Body of pancreas (tissue), 4 donors: ENCODE measurements at regions of chr5 and their contacts with region 1.

Region 1: DNA sequence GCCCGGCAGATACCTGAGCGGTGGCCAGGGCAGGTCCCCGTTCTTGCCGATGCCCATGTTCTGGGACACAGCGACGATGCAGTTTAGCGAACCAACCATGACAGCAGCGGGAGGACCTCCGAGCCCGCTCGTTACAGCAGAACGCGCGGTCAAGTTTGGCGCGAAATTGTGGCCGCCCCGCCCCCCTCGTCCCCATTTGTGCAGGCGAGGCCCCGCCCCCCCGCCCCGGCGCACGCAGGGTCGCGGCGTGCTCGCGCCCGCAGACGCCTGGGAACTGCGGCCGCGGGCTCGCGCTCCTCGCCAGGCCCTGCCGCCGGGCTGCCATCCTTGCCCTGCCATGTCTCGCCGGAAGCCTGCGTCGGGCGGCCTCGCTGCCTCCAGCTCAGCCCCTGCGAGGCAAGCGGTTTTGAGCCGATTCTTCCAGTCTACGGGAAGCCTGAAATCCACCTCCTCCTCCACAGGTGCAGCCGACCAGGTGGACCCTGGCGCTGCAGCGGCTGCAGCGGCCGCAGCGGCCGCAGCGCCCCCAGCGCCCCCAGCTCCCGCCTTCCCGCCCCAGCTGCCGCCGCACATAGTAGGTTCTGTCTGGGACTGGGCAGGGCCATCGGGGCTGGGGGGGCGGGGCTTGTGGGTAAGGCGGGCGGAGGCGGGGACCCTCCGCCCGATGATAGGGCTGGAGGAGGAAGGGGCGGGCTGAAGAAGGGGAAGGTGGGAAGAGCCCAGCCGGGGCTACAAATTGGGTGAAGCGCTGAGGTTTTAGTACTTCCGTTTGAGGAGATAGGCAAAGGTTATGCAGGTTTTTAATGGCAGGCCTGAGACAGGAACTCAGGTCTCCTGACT is at the starts of genes DHFR and MSH3:
- DNase-seq: peak; percentile 82 to 91 (median 88)
- ATAC-seq: peak; percentile 63
- H3K4me3 ChIP-seq: peak within 1 kb of the TSS; percentile 83 to 85
- H3K27ac ChIP-seq: peak within 1 kb of the TSS; percentile 79 to 98 (median 94)
- H3K4me1 ChIP-seq: peaks cover 25% of the 10 kb centered on the region
- H3K27me3 ChIP-seq: no peaks in the 10 kb centered on the region
- CTCF ChIP-seq: peak in 2 of 7 experiments; percentile 21 to 39
- POLR2A ChIP-seq: peak; percentile 36 to 68 (median 65)
- total RNA-seq, gene DHFR: 1.8 to 2.0 TPM
- total RNA-seq, gene MSH3: 9.2 to 10.9 TPM

Region 2: DNA sequence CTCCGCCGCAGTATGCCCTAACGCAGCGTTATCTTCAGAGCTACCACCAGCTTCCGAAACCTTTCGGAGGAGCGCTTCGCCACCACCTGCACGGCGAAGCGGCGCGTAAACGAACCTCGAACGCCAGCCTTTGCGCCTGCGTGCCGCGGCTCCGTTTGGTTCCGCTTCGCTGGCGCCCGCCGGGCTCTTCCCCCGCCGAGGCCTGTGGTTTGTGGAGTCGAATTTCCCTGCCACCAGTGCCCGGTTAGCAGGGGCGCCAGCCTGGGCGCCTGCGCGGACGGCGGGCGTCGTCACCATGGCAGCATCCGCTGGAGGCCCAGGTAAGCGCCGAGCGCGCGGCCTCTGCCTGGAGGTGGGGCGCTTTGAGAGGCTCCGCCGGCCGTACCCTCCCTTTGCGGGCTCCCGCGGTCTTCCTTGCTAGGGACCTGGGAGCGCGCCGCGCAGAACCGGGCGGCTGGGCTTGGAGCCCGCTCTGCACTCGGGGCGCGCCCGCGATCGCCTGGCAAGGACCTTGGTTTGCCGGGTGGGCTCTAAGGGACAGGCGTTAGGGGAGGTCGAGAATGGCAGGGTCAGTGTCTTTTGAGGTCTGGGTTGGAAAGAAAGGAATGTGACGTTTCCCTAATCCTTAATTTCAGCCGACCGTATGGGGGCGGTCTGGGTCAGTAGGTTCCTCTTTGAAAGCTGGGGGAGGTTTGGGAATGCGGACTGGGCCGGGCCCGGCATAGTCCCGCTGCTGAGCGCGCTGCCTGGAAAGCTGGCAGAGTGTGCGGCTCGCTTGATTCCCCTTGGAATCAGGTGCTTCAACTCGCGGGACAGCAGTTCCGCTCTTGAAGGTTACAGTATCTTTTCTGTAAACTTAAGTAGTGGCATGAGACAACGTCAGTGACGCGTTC is 166.5 kb before region 1 on chr5 and contains the start of gene FAM151B:
- intact Hi-C with region 1: loop called (anchors 10 kb)
- DNase-seq: peak; percentile 95 to 97 (median 96)
- ATAC-seq: peak; percentile 97
- H3K4me3 ChIP-seq: peak within 1 kb of the TSS; percentile 52 to 87
- H3K27ac ChIP-seq: peak within 1 kb of the TSS; percentile 79 to 94 (median 84)
- H3K4me1 ChIP-seq: peaks cover 8% of the 10 kb centered on the region
- H3K27me3 ChIP-seq: no peaks in the 10 kb centered on the region
- CTCF ChIP-seq: peak in 4 of 7 experiments; percentile 19 to 42 (median 30)
- POLR2A ChIP-seq: peak; percentile 68 to 89 (median 87)
- total RNA-seq, gene FAM151B: 1.6 to 4.6 TPM

Region 3: GRCh38 chr5:80871541-80871961 is 216.9 kb after region 1 on chr5:
- intact Hi-C with region 1: no loop called
- DNase-seq: no peak
- ATAC-seq: no peak
- H3K4me3 ChIP-seq: no peak overlapping the region
- H3K27ac ChIP-seq: no peak overlapping the region
- H3K4me1 ChIP-seq: no peaks in the 10 kb centered on the region
- H3K27me3 ChIP-seq: no peaks in the 10 kb centered on the region
- CTCF ChIP-seq: no peak
- POLR2A ChIP-seq: no peak